ENCODE measurements at regions of chr13 and their contacts with region 1.

Region 1: GRCh38 chr13:24220086-24220703 is 59.7 kb downstream of the SPATA13 start:
- DNase-seq: peak; percentile 61
- H3K4me3 Mint-ChIP-seq: no peak overlapping the region
- H3K27ac Mint-ChIP-seq: no peak overlapping the region
- H3K4me1 Mint-ChIP-seq: peaks cover 34% of the 10 kb centered on the region
- H3K27me3 Mint-ChIP-seq: no peaks in the 10 kb centered on the region

Region 2: DNA sequence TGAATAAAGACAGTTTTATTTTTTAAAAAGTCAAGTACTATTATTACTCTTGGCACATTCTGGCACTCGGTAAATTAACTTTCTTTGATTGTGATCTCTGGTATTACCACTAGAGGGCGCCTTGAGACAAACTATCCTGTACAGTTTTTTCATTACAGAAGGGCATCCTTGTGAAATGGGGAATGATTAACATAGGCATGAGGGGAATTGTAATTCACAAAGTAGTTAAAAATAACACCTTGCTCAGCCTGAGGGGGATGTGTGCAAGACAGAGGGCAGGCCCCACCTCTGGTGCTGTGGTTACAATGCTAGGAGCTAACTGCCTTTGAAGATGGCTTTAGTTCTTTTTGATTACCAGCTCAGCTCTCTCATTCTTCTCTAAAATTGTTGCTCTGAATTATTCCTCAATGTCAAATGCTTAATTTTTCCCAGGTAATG is 298.7 kb before region 1 on chr13:
- CTCF ChIA-PET with region 1: interaction called, 20 read pairs
- POLR2A ChIA-PET with region 1: no interaction called
- intact Hi-C with region 1: loop called (anchors 1 kb)
- DNase-seq: no peak
- H3K4me3 Mint-ChIP-seq: no peak overlapping the region
- H3K27ac Mint-ChIP-seq: no peak overlapping the region
- H3K4me1 Mint-ChIP-seq: no peaks in the 10 kb centered on the region
- H3K27me3 Mint-ChIP-seq: peaks cover 20% of the 10 kb centered on the region

Region 3: DNA sequence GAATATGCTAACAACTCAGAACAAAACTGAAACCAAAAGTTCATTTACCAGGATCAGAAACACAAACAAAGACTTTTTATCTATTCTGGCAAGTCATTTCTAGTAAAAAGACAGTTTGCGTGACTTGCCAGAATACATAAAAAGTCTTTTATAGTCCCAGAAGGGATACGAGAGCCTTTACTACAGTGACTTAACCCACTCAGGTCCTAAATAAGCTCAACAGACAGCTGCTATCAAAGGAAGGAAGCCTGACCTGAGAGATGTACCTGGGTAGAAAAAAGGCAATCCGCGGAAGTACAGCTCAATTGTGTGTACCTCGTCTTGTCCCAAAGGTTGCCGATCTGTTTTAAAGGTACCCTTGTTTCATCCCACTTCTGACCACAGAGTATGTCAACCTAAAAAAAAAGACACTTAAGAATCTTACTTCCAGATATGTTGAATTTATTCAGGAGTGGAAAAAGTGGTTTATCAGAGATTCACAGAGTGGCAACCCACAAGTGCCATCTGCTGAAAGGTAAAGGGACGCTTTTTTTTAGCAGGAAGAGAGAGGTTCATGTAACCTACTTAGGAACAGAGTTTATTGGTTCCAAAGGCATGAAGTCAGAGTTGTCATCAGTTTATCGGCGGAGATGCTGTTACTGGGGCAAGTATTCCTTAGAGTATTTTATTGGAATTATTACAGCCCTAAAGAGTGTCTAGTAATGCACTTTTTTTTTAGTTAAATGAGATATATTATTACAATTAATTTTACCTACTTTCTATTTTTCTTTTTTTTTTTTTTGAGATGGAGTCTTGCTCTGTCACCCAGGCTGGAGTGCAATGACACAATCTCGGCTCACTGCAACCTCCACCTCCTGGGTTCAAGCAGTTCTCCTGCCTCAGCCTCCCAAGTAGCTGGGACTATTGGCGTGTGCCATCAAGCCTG is 253.2 kb before region 1 on chr13:
- CTCF ChIA-PET with region 1: interaction called, 4 read pairs
- POLR2A ChIA-PET with region 1: no interaction called
- intact Hi-C with region 1: loop called (anchors 2 kb)
- DNase-seq: peak; percentile 31
- H3K4me3 Mint-ChIP-seq: peak overlapping the region; percentile 51
- H3K27ac Mint-ChIP-seq: peak overlapping the region; percentile 83
- H3K4me1 Mint-ChIP-seq: peaks cover 30% of the 10 kb centered on the region
- H3K27me3 Mint-ChIP-seq: no peaks in the 10 kb centered on the region

Region 4: DNA sequence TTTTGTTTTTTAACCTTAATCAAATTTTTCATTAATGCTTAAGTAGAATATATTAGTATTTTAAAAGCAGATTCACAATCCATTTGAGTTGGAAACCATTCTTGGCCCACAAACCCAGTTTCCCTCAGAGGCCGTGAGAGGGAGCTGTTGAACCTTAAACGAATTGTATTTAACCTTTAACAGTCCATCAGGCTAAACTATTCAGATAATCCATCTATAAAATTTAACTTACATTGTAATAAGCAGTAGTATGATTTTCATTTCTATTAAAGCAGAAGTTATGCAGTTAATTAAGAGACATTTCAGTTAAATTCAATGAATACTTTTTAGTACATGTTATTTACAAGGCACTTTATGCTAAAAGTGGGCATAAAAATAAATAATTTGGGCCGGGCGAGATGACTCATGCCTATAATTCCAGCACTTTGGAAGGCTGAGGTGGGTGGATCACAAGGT is 199.8 kb before region 1 on chr13:
- CTCF ChIA-PET with region 1: interaction called, 32 read pairs
- POLR2A ChIA-PET with region 1: no interaction called
- intact Hi-C with region 1: loop called (anchors 1 kb)
- DNase-seq: peak; percentile 51
- H3K4me3 Mint-ChIP-seq: no peak overlapping the region
- H3K27ac Mint-ChIP-seq: no peak overlapping the region
- H3K4me1 Mint-ChIP-seq: peaks cover 3% of the 10 kb centered on the region
- H3K27me3 Mint-ChIP-seq: no peaks in the 10 kb centered on the region

Region 5: GRCh38 chr13:24053519-24054251 is 166.5 kb before region 1 on chr13:
- CTCF ChIA-PET with region 1: interaction called, 67 read pairs
- POLR2A ChIA-PET with region 1: no interaction called
- intact Hi-C with region 1: loop called (anchors 1 kb)
- DNase-seq: peak; percentile 78
- H3K4me3 Mint-ChIP-seq: no peak overlapping the region
- H3K27ac Mint-ChIP-seq: no peak overlapping the region
- H3K4me1 Mint-ChIP-seq: peaks cover 4% of the 10 kb centered on the region
- H3K27me3 Mint-ChIP-seq: peaks cover 27% of the 10 kb centered on the region

Region 6: DNA sequence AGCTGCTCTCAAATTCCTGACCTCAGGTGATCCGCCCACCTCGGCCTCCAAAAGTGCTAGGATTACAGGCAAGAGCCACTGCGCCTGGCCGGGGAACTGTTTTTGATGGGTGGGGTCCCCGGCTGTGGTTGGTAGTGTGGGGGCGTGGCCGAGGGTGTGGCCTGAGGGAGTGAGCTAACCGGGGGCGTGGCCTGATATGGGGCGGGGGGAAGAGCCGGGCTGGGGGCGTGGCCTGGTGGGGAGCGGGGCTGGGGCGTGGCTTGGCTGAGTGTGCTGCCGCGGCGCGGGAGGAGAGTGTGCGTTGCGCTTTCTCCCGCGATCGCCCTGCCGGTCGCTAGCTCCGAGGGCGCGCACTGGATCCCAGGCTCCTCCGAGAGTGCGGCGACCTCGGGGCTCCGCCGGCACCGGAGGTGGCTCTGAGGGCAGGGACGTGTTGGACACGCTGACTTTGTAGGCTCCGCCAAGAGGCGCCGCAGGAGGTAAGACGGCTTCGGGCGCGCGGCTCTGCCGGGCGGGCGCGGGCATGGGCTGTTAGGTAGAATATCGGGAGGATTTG is 59.7 kb before region 1 on chr13 and contains the start of gene SPATA13:
- CTCF ChIA-PET with region 1: interaction called, 3 read pairs
- POLR2A ChIA-PET with region 1: no interaction called
- intact Hi-C with region 1: loop called (anchors 2 kb)
- DNase-seq: peak; percentile 94
- H3K4me3 Mint-ChIP-seq: peak within 1 kb of the TSS; percentile 83
- H3K27ac Mint-ChIP-seq: no peak within 1 kb of the TSS
- H3K4me1 Mint-ChIP-seq: peaks cover 13% of the 10 kb centered on the region
- H3K27me3 Mint-ChIP-seq: peaks cover 11% of the 10 kb centered on the region
- total RNA-seq, gene SPATA13: 50.3 to 50.8 TPM